Endothelial cell of umbilical vein (primary cell): ENCODE measurements at regions of chr2 and their contacts with region 1.

Region 1: GRCh38 chr2:41414486-41415230 is 633.2 kb upstream of the PKDCC start:
- DNase-seq: peak; percentile 39
- H3K4me3 ChIP-seq: no peak overlapping the region
- H3K27ac ChIP-seq: no peak overlapping the region
- H3K4me1 ChIP-seq: no peaks in the 10 kb centered on the region
- H3K27me3 ChIP-seq: no peaks in the 10 kb centered on the region
- CTCF ChIP-seq: peak; percentile 37 to 44
- POLR2A ChIP-seq: no peak

Region 2: GRCh38 chr2:41498751-41499150 is 84.1 kb after region 1 on chr2:
- CTCF ChIA-PET with region 1: no interaction called
- POLR2A ChIA-PET with region 1: no interaction called
- dilution Hi-C with region 1: no loop called
- intact Hi-C with region 1: no loop called
- DNase-seq: no peak
- H3K4me3 ChIP-seq: no peak overlapping the region
- H3K27ac ChIP-seq: no peak overlapping the region
- H3K4me1 ChIP-seq: no peaks in the 10 kb centered on the region
- H3K27me3 ChIP-seq: no peaks in the 10 kb centered on the region
- CTCF ChIP-seq: no peak
- POLR2A ChIP-seq: no peak

Region 3: GRCh38 chr2:41782306-41783158 is 367.9 kb after region 1 on chr2:
- CTCF ChIA-PET with region 1: interaction called, 10 read pairs
- POLR2A ChIA-PET with region 1: no interaction called
- dilution Hi-C with region 1: no loop called
- intact Hi-C with region 1: loop called (anchors 1 kb)
- DNase-seq: peak; percentile 60
- H3K4me3 ChIP-seq: no peak overlapping the region
- H3K27ac ChIP-seq: no peak overlapping the region
- H3K4me1 ChIP-seq: no peaks in the 10 kb centered on the region
- H3K27me3 ChIP-seq: peaks cover 0 to 3% of the 10 kb centered on the region in 2 experiments
- CTCF ChIP-seq: peak; percentile 42 to 52
- POLR2A ChIP-seq: no peak